K562 (cell line): ENCODE measurements at regions of chr4 and their contacts with region 1.

Region 1: DNA sequence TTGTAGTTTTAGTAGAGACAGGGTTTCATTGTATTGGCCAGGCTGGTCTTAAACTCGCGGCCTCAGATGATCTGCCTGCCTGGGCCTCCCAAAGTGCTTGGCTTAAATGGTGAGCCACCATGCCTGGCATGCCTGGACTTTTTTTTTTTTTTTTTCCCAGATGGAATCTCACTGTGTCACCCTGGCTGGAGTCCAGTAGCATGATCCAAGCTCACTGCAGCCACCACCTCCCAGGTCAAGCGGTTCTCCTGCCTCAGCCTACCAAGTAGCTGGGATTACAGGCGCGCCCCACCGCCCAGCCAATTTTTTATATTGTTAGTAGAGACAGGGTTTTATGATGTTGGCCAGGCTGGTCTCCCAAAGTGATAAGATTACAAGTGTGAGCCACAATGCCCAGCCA is 8.4 kb downstream of the UBE2K start:
- DNase-seq: no peak
- ATAC-seq: peak; percentile 12
- H3K4me3 ChIP-seq: no peak overlapping the region
- H3K27ac ChIP-seq: no peak overlapping the region
- H3K4me1 ChIP-seq: peaks cover 8 to 11% of the 10 kb centered on the region in 2 experiments; a peak in 4 of 5 replicates
- H3K27me3 ChIP-seq: no peaks in the 10 kb centered on the region
- CTCF ChIP-seq: no peak
- EP300 ChIP-seq: no peak
- POLR2A ChIP-seq: no peak
- RAD21 ChIP-seq: no peak

Region 2: GRCh38 chr4:39718366-39719323 is 12.3 kb after region 1 on chr4:
- CTCF ChIA-PET with region 1: no interaction called
- POLR2A ChIA-PET with region 1: interaction called, 10 read pairs
- in situ Hi-C with region 1: no loop called
- intact Hi-C with region 1: no loop called
- DNase-seq: no peak
- ATAC-seq: peak; percentile 27
- H3K4me3 ChIP-seq: no peak overlapping the region
- H3K27ac ChIP-seq: no peak overlapping the region
- H3K4me1 ChIP-seq: peaks cover 0 to 9% of the 10 kb centered on the region in 2 experiments; a peak in 2 of 5 replicates
- H3K27me3 ChIP-seq: no peaks in the 10 kb centered on the region
- CTCF ChIP-seq: no peak
- EP300 ChIP-seq: no peak
- POLR2A ChIP-seq: no peak
- RAD21 ChIP-seq: no peak